ENCODE measurements at regions of chr12 and their contacts with region 1.

Region 1: GRCh38 chr12:6195665-6196535 is 4.3 kb upstream of the CD9 start:
- DNase-seq: peak; percentile 55 to 72 (median 56)
- H3K4me3 ChIP-seq: no peak overlapping the region
- H3K4me3 Mint-ChIP-seq: no peak overlapping the region
- H3K27ac ChIP-seq: no peak overlapping the region
- H3K27ac Mint-ChIP-seq: no peak overlapping the region
- H3K4me1 ChIP-seq: peaks cover 6% of the 10 kb centered on the region
- H3K4me1 Mint-ChIP-seq: no peaks in the 10 kb centered on the region
- H3K27me3 ChIP-seq: peaks cover 8% of the 10 kb centered on the region
- H3K27me3 Mint-ChIP-seq: peaks cover 6 to 36% of the 10 kb centered on the region in 2 donors

Region 2: GRCh38 chr12:5977556-5977955 is 218.3 kb before region 1 on chr12:
- CTCF ChIA-PET with region 1: no interaction called
- POLR2A ChIA-PET with region 1: no interaction called
- intact Hi-C with region 1: no loop called
- DNase-seq: no peak
- H3K4me3 ChIP-seq: no peak overlapping the region
- H3K4me3 Mint-ChIP-seq: no peak overlapping the region
- H3K27ac ChIP-seq: no peak overlapping the region
- H3K27ac Mint-ChIP-seq: no peak overlapping the region
- H3K4me1 ChIP-seq: no peaks in the 10 kb centered on the region
- H3K4me1 Mint-ChIP-seq: no peaks in the 10 kb centered on the region
- H3K27me3 ChIP-seq: no peaks in the 10 kb centered on the region
- H3K27me3 Mint-ChIP-seq: peaks cover 24 to 29% of the 10 kb centered on the region in 2 donors

Region 3: DNA sequence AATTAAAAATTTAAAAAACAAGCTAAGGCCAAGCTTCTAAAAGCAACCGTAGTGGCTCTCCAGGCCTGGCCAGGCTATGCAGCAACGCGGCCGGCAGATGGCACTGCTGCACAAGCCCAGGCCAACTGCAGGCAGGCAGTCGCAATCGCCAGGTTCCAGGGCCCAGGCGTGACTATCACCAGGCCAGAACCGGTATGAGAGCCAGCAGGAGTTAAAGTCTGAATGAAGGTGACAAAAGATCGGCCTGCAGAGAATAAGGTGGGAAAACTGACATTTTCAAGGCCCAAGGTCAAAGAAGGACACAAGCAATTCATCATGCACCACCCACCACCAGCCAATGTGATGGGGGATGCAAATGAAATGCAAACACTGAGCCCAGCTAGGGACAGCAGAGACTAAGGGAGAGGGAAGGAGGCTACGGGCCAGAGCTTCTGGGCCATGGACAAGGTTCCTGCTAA is 207.2 kb before region 1 on chr12:
- CTCF ChIA-PET with region 1: interaction called, 13 read pairs
- POLR2A ChIA-PET with region 1: no interaction called
- intact Hi-C with region 1: no loop called
- DNase-seq: peak; percentile 47 to 60 (median 55)
- H3K4me3 ChIP-seq: no peak overlapping the region
- H3K4me3 Mint-ChIP-seq: no peak overlapping the region
- H3K27ac ChIP-seq: no peak overlapping the region
- H3K27ac Mint-ChIP-seq: no peak overlapping the region
- H3K4me1 ChIP-seq: no peaks in the 10 kb centered on the region
- H3K4me1 Mint-ChIP-seq: peaks cover 0 to 2% (median 0%) of the 10 kb centered on the region in 4 donors
- H3K27me3 ChIP-seq: no peaks in the 10 kb centered on the region
- H3K27me3 Mint-ChIP-seq: peaks cover 3 to 6% of the 10 kb centered on the region in 2 donors

Region 4: DNA sequence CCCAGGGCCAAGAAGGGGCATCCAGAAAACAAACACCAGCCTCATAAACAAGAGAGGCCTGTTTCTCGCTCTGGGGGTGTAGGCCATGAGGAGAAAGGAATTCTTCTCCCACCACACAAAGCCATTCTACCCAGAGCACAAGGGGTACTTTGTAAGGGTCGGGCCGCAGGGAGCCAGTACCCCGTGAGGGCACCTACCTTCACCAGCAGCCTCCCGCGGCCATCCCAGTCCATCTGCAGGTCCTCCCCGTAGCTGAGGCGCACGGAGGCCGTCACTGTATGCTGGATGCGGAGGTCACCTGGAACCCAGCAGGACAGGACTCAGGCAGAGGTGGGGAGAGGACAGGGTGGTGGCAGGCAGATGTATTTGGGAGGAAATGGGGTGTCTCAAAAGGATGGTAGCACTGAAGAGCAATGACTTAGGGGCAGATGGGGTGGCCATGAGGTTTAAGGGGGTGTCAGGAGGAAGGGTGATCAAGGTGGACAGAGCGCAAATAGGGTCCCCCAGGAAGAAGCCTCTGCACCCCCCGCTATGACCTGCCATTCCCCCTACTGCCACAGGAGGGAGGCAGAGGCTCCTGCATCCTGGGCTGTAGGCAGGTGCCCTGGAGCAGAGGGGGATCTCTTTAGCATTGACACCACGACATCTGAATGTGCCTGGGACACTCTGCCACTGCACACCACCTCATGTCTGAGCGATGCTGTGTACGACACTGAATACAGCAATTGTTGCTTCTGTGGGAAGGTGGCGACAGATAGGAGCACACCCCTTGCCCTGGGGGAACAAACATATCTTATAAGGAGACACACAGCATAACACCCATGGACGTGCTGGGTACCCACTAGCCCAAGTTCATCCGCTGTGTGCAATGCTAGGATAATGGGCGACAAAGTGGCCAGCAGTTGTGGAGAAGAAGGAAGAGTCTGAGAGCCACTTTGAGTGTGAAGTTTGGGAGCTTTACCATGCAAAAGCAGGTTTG is 132.9 kb before region 1 on chr12:
- CTCF ChIA-PET with region 1: interaction called, 4 read pairs
- POLR2A ChIA-PET with region 1: no interaction called
- intact Hi-C with region 1: loop called (anchors 1 kb)
- DNase-seq: peak in 4 of 5 donors; percentile 35 to 54 (median 40)
- H3K4me3 ChIP-seq: no peak overlapping the region
- H3K4me3 Mint-ChIP-seq: no peak overlapping the region
- H3K27ac ChIP-seq: no peak overlapping the region
- H3K27ac Mint-ChIP-seq: peak overlapping the region in 2 of 7 donors; percentile 19 to 60
- H3K4me1 ChIP-seq: no peaks in the 10 kb centered on the region
- H3K4me1 Mint-ChIP-seq: peaks cover 0 to 2% (median 0%) of the 10 kb centered on the region in 4 donors
- H3K27me3 ChIP-seq: no peaks in the 10 kb centered on the region
- H3K27me3 Mint-ChIP-seq: peaks cover 10% of the 10 kb centered on the region in 2 donors

Region 5: GRCh38 chr12:6140651-6141447 is 55.1 kb before region 1 on chr12:
- CTCF ChIA-PET with region 1: interaction called, 10 read pairs
- POLR2A ChIA-PET with region 1: interaction called, 3 read pairs
- intact Hi-C with region 1: no loop called
- DNase-seq: peak in 4 of 5 donors; percentile 15 to 33 (median 26)
- H3K4me3 ChIP-seq: no peak overlapping the region
- H3K4me3 Mint-ChIP-seq: peak overlapping the region in 7 of 8 donors; percentile 50 to 87 (median 69)
- H3K27ac ChIP-seq: no peak overlapping the region
- H3K27ac Mint-ChIP-seq: peak overlapping the region; percentile 85 to 93 (median 91)
- H3K4me1 ChIP-seq: peaks cover 26% of the 10 kb centered on the region
- H3K4me1 Mint-ChIP-seq: peaks cover 25 to 37% (median 31%) of the 10 kb centered on the region in 4 donors
- H3K27me3 ChIP-seq: no peaks in the 10 kb centered on the region
- H3K27me3 Mint-ChIP-seq: no peaks in the 10 kb centered on the region

Region 6: GRCh38 chr12:6211421-6211869 is 15.5 kb after region 1 on chr12:
- CTCF ChIA-PET with region 1: interaction called, 20 read pairs
- POLR2A ChIA-PET with region 1: no interaction called
- intact Hi-C with region 1: no loop called
- DNase-seq: no peak
- H3K4me3 ChIP-seq: no peak overlapping the region
- H3K4me3 Mint-ChIP-seq: no peak overlapping the region
- H3K27ac ChIP-seq: no peak overlapping the region
- H3K27ac Mint-ChIP-seq: no peak overlapping the region
- H3K4me1 ChIP-seq: no peaks in the 10 kb centered on the region
- H3K4me1 Mint-ChIP-seq: peaks cover 0 to 1% (median 0%) of the 10 kb centered on the region in 4 donors
- H3K27me3 ChIP-seq: no peaks in the 10 kb centered on the region
- H3K27me3 Mint-ChIP-seq: peaks cover 0 to 6% of the 10 kb centered on the region in 2 donors

Region 7: DNA sequence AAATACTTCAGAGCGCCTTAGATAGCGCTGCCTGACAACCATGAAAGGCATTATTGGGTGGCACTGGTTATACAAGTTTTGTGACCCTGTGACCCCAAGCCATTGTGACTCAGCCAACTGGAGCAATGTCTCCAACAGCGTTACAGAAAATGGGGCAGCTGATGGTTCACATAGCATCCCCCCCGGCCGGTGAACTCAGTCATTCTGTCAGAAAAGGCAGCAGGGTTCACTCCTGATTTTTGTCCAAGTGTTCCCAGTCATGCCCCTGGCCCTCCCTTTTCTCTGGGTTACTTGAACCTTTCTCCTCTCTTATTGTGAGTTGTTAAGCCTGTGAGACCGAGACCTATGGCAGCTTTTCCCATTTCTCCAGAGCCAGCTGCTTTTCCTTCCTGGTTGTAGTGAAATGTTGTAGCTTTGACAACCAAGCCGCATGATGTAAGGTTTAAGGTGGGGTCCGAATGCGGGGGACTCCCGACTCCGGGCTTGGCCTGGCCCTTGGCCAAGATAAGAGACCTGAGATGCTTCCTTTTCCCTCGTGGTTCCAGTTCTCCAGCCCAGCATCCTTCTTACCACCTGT is 26.3 kb after region 1 on chr12:
- CTCF ChIA-PET with region 1: no interaction called
- POLR2A ChIA-PET with region 1: no interaction called
- intact Hi-C with region 1: no loop called
- DNase-seq: no peak
- H3K4me3 ChIP-seq: no peak overlapping the region
- H3K4me3 Mint-ChIP-seq: no peak overlapping the region
- H3K27ac ChIP-seq: no peak overlapping the region
- H3K27ac Mint-ChIP-seq: no peak overlapping the region
- H3K4me1 ChIP-seq: no peaks in the 10 kb centered on the region
- H3K4me1 Mint-ChIP-seq: peaks cover 0 to 4% (median 4%) of the 10 kb centered on the region in 4 donors
- H3K27me3 ChIP-seq: no peaks in the 10 kb centered on the region
- H3K27me3 Mint-ChIP-seq: peaks cover 0 to 1% of the 10 kb centered on the region in 2 donors

Region 8: DNA sequence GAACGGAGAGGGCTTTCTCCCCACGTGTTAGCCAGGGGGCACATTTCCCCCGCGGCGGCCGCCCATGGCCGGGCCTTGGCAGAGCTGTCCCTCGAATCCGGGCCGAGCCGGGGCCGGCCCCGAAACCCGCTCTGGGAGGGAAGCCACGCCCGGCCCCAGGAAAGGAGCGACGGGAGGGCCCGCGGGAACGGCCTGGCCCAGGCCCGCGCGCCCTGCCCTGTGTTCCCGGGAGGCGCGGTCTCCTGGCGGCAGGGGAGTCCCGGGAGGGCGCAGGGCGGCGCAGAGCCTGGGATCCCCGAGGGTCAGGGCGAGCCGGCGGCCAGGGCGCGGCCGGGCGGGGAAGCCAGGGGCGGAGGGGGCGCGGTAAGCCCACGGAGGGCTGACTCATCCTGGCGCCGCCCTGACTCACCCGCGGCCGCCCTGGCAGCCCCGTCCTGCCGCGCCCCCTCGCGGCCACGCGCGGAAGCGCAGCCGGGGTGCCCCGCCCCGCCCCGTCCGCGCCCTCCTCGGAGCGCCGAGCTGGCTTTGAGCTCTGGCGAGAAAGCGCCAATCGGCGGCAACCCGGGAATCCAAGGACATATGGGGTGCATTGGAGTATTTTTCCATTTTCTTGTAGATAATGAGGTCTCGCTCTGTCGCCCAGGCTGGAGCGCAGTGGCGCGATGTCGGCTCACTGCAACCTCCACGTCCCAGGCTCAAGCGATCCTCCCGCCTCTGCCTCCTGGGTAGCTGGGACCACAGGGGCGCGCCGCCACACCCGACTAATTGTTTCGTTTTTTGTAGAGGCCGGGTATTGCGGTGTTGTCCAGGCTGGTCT is 82.7 kb after region 1 on chr12:
- CTCF ChIA-PET with region 1: interaction called, 145 read pairs
- POLR2A ChIA-PET with region 1: interaction called, 3 read pairs
- intact Hi-C with region 1: loop called (anchors 1 kb)
- DNase-seq: peak; percentile 74 to 88 (median 81)
- H3K4me3 ChIP-seq: peak overlapping the region in 1 of 2 donors; percentile 43
- H3K4me3 Mint-ChIP-seq: peak overlapping the region; percentile 61 to 86 (median 80)
- H3K27ac ChIP-seq: no peak overlapping the region
- H3K27ac Mint-ChIP-seq: peak overlapping the region in 1 of 7 donors; percentile 54
- H3K4me1 ChIP-seq: peaks cover 11% of the 10 kb centered on the region
- H3K4me1 Mint-ChIP-seq: peaks cover 2 to 10% (median 4%) of the 10 kb centered on the region in 4 donors
- H3K27me3 ChIP-seq: no peaks in the 10 kb centered on the region
- H3K27me3 Mint-ChIP-seq: peaks cover 9 to 34% of the 10 kb centered on the region in 2 donors

Region 9: DNA sequence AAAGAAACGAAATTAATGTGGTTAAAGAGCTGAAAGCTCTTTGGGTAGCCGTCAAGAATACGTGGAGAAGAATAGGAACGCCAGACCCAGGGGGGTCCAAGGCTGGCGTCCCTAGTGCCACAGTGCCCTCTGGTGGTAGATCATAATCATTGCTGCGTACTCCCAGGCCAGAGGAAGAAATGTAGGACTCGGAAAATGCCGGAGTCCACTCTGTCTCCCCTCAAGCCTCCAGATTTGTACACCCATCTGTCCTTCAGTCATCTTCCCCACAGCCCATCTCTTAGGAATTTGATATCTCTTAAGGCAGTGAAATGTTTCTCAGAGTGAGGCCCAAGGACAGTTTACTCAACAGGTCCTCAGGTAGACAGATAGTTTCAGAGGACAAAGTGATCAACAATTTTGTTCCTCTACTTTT is 89.2 kb after region 1 on chr12:
- CTCF ChIA-PET with region 1: interaction called, 145 read pairs
- POLR2A ChIA-PET with region 1: no interaction called
- intact Hi-C with region 1: loop called (anchors 1 kb)
- DNase-seq: peak in 4 of 5 donors; percentile 51 to 64 (median 55)
- H3K4me3 ChIP-seq: no peak overlapping the region
- H3K4me3 Mint-ChIP-seq: no peak overlapping the region
- H3K27ac ChIP-seq: no peak overlapping the region
- H3K27ac Mint-ChIP-seq: peak overlapping the region in 1 of 7 donors; percentile 31
- H3K4me1 ChIP-seq: peaks cover 4% of the 10 kb centered on the region
- H3K4me1 Mint-ChIP-seq: peaks cover 0 to 9% (median 4%) of the 10 kb centered on the region in 4 donors
- H3K27me3 ChIP-seq: no peaks in the 10 kb centered on the region
- H3K27me3 Mint-ChIP-seq: peaks cover 8 to 23% of the 10 kb centered on the region in 2 donors

Region 10: GRCh38 chr12:6752921-6753771 is 557.2 kb after region 1 on chr12 and contains the start of gene MLF2:
- CTCF ChIA-PET with region 1: no interaction called
- POLR2A ChIA-PET with region 1: no interaction called
- intact Hi-C with region 1: no loop called
- DNase-seq: peak; percentile 96 to 98 (median 97)
- H3K4me3 ChIP-seq: peak within 1 kb of the TSS; percentile 62 to 77
- H3K4me3 Mint-ChIP-seq: peak within 1 kb of the TSS; percentile 94 to 98 (median 96)
- H3K27ac ChIP-seq: peak within 1 kb of the TSS; percentile 84
- H3K27ac Mint-ChIP-seq: peak within 1 kb of the TSS; percentile 99 to 100 (median 99)
- H3K4me1 ChIP-seq: peaks cover 13% of the 10 kb centered on the region
- H3K4me1 Mint-ChIP-seq: peaks cover 10 to 24% (median 17%) of the 10 kb centered on the region in 4 donors
- H3K27me3 ChIP-seq: no peaks in the 10 kb centered on the region
- H3K27me3 Mint-ChIP-seq: peaks cover 0 to 1% of the 10 kb centered on the region in 2 donors
- total RNA-seq, gene MLF2: 79.8 to 80.3 TPM